Activated B cell treated with CpG ODN at 0.5 μM for 24 hours (primary cell): ENCODE measurements at regions of chr7 and their contacts with region 1.

Region 1: DNA sequence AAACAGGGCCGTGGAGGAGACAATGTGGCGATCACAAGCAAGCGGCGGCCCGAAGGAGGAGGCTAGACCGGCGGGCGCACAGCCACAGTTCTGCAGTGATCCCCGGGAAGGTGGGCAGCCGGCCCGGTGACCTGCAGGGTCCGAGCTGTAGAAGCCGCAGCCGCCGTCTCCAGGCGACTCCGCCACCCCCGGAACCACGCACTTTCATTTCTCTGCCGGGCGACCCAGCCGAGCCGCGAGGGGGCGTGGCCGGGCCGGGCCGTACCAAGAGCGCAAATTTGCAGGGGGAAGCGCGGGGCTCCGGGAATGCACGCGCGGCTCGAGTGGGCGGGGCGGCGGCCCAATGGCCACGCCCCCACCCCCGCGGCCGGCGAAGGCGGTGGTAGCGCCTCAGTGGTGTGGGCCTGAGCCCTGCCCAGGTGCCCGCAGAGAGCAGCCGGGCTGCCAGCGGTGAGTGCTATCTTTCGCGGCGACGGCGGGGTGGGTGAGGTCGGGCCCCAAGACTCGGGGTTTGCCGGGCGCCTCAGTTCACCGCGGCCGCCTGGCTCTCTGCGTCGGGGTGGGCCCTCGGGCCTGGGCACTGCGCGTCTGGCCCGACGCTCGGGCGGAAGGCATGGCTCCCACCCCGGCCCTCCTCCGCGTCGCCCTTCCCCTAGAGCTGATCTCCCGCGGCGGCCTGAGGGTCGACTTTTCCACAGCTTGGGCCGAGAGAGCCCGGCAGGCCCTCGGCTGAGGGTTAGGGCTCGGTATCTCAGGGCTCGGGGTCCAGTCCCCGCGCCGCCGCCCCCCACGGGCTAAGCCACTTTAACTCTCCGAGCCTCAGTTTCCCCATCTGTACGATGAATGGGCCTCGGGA is at the start of gene POR:
- DNase-seq: peak; percentile 100
- ATAC-seq: peak; percentile 94
- H3K4me3 Mint-ChIP-seq: peak within 1 kb of the TSS; percentile 90
- H3K27ac Mint-ChIP-seq: peak within 1 kb of the TSS; percentile 94
- H3K4me1 Mint-ChIP-seq: peaks cover 33% of the 10 kb centered on the region
- H3K27me3 Mint-ChIP-seq: no peaks in the 10 kb centered on the region
- CTCF ChIP-seq: no peak
- total RNA-seq, gene POR: 63.5 and 66.8 TPM in 2 replicates

Region 2: DNA sequence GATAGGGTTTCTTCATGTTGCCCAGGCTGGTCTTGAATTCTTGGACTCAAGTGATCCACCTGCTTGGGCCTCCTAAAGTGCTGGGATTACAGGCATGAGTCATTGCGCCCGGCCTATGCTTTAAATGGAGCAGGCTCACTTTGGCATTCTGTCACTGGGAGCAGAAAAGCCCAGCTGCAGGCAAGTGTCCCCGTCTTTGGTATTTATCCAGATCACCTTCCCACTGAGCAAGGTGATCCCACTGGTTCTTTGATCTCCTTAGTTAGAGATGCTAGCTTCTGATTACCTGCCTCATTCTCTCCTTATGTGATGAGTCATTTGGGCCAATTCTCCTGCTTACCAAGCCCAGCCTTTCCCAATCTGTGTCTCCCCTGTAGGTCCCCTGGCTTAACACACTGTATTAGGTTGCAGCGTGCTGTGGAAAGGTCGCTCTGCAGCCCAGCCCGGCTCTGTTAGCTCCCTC is 383.6 kb before region 1 on chr7:
- CTCF ChIA-PET with region 1: no interaction called
- POLR2A ChIA-PET with region 1: no interaction called
- intact Hi-C with region 1: loop called (anchors 1 kb)
- DNase-seq: no peak
- ATAC-seq: no peak
- H3K4me3 Mint-ChIP-seq: no peak overlapping the region
- H3K27ac Mint-ChIP-seq: no peak overlapping the region
- H3K4me1 Mint-ChIP-seq: peaks cover 24% of the 10 kb centered on the region
- H3K27me3 Mint-ChIP-seq: no peaks in the 10 kb centered on the region
- CTCF ChIP-seq: no peak

Region 3: DNA sequence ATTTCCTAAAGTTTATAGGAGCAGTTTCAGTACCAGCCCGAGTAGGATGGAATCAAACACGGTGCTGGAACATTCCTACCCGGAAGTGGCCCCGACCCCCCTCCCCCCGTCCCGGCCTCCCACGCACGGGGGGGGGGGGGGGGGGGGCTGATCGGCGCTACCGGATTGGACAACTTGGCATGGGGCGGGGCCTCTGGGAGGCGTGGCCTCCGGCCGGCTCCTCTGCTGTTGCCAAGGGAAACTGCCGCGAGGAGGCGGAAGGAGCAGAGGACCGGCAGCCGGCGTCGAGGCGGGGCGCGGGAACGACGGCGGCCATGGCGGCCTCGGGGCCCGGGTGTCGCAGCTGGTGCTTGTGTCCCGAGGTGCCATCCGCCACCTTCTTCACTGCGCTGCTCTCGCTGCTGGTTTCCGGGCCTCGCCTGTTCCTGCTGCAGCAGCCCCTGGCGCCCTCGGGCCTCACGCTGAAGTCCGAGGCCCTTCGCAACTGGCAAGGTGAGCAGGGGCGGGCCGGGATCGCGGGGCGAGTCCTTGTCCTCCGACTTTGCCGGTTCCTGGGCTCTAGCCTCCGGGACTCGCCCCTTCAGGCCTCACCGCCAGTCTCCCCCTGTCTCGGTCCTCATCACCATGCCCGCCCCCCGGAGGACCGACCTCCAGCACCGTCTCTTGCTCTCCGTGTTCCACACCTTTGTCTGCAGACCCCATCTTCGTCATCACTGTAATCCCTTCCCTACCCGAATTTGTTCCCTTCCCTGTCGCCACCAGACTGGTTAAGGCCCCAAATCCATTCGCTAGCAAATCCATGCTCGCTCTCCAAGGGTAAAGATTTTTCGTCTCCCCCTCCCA is 36.0 kb before region 1 on chr7 and contains the start of gene RHBDD2:
- CTCF ChIA-PET with region 1: no interaction called
- POLR2A ChIA-PET with region 1: interaction called, 38 read pairs
- intact Hi-C with region 1: loop called (anchors 1 kb)
- DNase-seq: peak; percentile 89
- ATAC-seq: peak; percentile 98
- H3K4me3 Mint-ChIP-seq: peak within 1 kb of the TSS; percentile 97
- H3K27ac Mint-ChIP-seq: peak within 1 kb of the TSS; percentile 94
- H3K4me1 Mint-ChIP-seq: peaks cover 26% of the 10 kb centered on the region
- H3K27me3 Mint-ChIP-seq: no peaks in the 10 kb centered on the region
- CTCF ChIP-seq: no peak
- total RNA-seq, gene RHBDD2: 28.4 and 32.8 TPM in 2 replicates

Region 4: GRCh38 chr7:75892634-75893272 is 22.2 kb before region 1 on chr7:
- CTCF ChIA-PET with region 1: no interaction called
- POLR2A ChIA-PET with region 1: no interaction called
- intact Hi-C with region 1: no loop called
- DNase-seq: no peak
- ATAC-seq: no peak
- H3K4me3 Mint-ChIP-seq: no peak overlapping the region
- H3K27ac Mint-ChIP-seq: no peak overlapping the region
- H3K4me1 Mint-ChIP-seq: no peaks in the 10 kb centered on the region
- H3K27me3 Mint-ChIP-seq: no peaks in the 10 kb centered on the region
- CTCF ChIP-seq: no peak

Region 5: DNA sequence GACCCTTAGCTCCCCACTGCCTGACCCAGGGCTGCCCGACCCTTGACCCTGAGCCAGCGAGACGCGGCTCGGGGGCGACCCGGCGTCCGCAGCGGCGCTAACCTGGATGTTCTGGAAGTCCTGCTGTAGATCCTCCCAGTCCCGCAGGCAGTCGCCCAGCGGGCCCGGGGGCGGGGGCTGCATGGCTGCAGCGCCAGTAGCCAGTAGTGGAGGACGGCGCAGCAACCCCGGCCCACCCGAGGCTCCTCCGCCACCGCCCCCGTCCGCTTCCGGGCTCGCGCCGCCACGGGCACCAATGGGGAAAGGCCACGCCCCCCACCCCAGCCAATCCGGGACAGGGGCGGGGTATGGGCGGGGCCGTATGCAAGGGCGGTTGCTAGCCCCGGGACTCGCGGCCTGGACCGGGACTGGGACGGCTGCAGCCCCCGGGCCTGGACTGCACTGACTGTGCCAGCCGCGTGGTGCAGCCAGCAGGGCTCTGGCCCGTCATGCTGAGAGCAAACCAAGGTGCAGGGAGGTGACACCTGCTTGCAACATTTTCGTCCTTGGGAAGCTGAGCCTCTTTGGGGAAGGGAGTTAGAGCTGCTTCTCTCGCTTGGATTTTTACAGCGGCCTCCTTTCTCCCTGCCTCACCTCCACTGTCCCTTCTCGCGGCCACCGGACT is 79.6 kb after region 1 on chr7 and contains the start of gene TMEM120A:
- CTCF ChIA-PET with region 1: no interaction called
- POLR2A ChIA-PET with region 1: interaction called, 10 read pairs
- intact Hi-C with region 1: loop called (anchors 1 kb)
- DNase-seq: peak; percentile 92
- ATAC-seq: peak; percentile 99
- H3K4me3 Mint-ChIP-seq: peak within 1 kb of the TSS; percentile 81
- H3K27ac Mint-ChIP-seq: peak within 1 kb of the TSS; percentile 25
- H3K4me1 Mint-ChIP-seq: peaks cover 39% of the 10 kb centered on the region
- H3K27me3 Mint-ChIP-seq: no peaks in the 10 kb centered on the region
- CTCF ChIP-seq: no peak
- total RNA-seq, gene TMEM120A: 95.6 and 104 TPM in 2 replicates

Region 6: DNA sequence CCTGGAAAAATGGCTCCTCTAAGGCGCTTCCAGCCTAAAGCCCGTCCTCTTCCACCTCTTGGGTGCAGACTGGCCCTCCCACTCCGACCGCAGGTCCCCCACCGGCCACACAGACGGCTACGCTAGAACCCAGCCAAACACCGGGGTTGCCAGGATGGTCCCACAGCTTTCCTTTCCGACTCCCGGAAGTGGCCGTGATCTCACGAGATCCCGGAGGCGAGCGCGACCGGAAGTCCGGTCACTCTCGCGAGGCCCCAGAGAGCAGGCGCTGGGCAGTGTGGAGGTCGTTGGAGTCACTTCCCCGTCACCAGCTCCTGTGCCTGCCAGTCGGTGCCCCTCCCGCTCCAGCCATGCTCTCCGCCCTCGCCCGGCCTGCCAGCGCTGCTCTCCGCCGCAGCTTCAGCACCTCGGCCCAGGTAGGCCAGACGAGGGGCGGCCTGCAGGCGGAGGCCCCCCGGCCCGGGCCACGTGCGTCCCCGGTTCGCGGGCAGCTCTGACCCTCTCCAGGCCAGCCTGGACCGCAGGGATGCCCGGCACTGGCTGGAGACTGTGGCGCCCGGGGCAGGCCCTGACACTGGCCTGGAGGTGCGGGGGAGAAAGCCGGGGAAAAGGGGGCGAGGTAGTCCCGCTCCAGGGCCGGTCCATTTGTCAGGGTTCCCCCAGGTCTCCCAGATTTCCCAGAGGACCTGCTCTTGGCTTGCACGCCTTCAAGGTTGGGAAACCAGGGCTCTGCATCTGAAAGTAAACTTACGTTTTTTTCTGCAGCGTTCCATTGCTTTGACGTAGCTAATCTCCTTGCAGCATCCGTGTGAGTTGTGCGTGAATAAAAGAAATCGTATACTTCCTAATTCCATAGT is 133.1 kb after region 1 on chr7 and contains the starts of genes MDH2 and STYXL1:
- CTCF ChIA-PET with region 1: interaction called, 7 read pairs
- POLR2A ChIA-PET with region 1: interaction called, 17 read pairs
- intact Hi-C with region 1: loop called (anchors 1 kb)
- DNase-seq: peak; percentile 82
- ATAC-seq: peak; percentile 89
- H3K4me3 Mint-ChIP-seq: peak within 1 kb of the TSS; percentile 98
- H3K27ac Mint-ChIP-seq: peak within 1 kb of the TSS; percentile 95
- H3K4me1 Mint-ChIP-seq: peaks cover 40% of the 10 kb centered on the region
- H3K27me3 Mint-ChIP-seq: no peaks in the 10 kb centered on the region
- CTCF ChIP-seq: no peak
- total RNA-seq, gene MDH2: 120 and 125 TPM in 2 replicates
- total RNA-seq, gene STYXL1: 23.1 and 28.1 TPM in 2 replicates